Activated T-helper 1 cell treated with anti-CD3 and anti-CD28 coated beads, Interleukin-12 subunit alpha, Interleukin-12 subunit beta, Interleukin-2, Interleukin-4 antibody, amounts not matched to agents 30 ng/mL and 10 ng/mL and 1 ng/mL, durations not matched to agents 14 hours and 24 hours and 36 hours (primary cell): ENCODE measurements at regions of chr7 and their contacts with region 1.

Region 1: GRCh38 chr7:36852017-36852416 is 127.7 kb upstream of the AOAH start:
- DNase-seq: no peak
- H3K4me3 Mint-ChIP-seq: peak overlapping the region; percentile 4
- H3K27ac Mint-ChIP-seq: peak overlapping the region; percentile 83
- H3K4me1 Mint-ChIP-seq: peaks cover 21% of the 10 kb centered on the region
- H3K27me3 Mint-ChIP-seq: no peaks in the 10 kb centered on the region

Region 2: DNA sequence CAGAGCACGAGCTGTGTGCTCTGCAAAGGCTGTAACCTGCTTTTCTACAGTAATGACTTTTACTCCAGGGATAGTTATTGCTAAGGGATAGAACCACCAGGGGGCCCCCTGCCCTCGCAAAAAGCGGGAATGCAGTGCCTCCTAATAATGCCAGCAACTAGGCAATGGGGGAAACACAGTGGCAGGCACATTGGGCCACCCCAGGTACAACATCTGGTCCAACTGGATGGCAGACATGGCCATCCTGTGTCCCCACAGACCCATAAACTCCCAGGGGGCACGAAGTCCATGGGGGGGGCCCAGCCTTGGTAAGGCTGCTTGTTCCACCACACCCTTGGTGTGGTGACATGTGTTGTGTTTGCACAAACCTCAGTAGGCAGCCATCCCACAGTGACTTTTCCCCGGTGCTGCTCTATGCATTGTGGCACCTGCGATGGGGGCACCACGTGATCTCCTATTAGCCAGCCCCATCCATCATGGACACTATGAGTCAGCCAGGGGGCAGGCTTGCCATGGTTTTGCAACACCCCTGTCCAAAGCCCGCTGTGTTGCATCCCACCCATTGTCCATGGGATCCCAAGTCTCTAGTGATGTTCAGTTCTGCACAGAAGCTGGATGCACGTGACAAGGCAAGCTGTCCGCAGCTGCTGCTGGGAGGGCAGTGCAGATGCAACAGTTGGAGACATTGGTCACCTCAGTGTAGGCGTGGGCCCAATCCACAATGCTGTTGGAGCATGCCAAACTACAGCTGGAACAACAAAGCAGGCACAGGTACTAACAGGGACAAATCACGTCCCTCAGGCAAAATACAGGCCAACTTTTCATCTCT is 378.3 kb before region 1 on chr7:
- intact Hi-C with region 1: loop called (anchors 5 kb)
- DNase-seq: no peak
- H3K4me3 Mint-ChIP-seq: no peak overlapping the region
- H3K27ac Mint-ChIP-seq: no peak overlapping the region
- H3K4me1 Mint-ChIP-seq: peaks cover 19% of the 10 kb centered on the region
- H3K27me3 Mint-ChIP-seq: no peaks in the 10 kb centered on the region

Region 3: GRCh38 chr7:36686499-36686898 is 165.5 kb before region 1 on chr7:
- intact Hi-C with region 1: loop called (anchors 1 kb)
- DNase-seq: no peak
- H3K4me3 Mint-ChIP-seq: peak overlapping the region; percentile 69
- H3K27ac Mint-ChIP-seq: peak overlapping the region; percentile 91
- H3K4me1 Mint-ChIP-seq: peaks cover 78% of the 10 kb centered on the region
- H3K27me3 Mint-ChIP-seq: no peaks in the 10 kb centered on the region

Region 4: GRCh38 chr7:36863901-36864701 is 12.1 kb after region 1 on chr7:
- intact Hi-C with region 1: no loop called
- DNase-seq: no peak
- H3K4me3 Mint-ChIP-seq: no peak overlapping the region
- H3K27ac Mint-ChIP-seq: no peak overlapping the region
- H3K4me1 Mint-ChIP-seq: peaks cover 32% of the 10 kb centered on the region
- H3K27me3 Mint-ChIP-seq: no peaks in the 10 kb centered on the region

Region 5: GRCh38 chr7:36884910-36885309 is 32.9 kb after region 1 on chr7:
- intact Hi-C with region 1: no loop called
- DNase-seq: no peak
- H3K4me3 Mint-ChIP-seq: no peak overlapping the region
- H3K27ac Mint-ChIP-seq: no peak overlapping the region
- H3K4me1 Mint-ChIP-seq: peaks cover 28% of the 10 kb centered on the region
- H3K27me3 Mint-ChIP-seq: no peaks in the 10 kb centered on the region

Region 6: DNA sequence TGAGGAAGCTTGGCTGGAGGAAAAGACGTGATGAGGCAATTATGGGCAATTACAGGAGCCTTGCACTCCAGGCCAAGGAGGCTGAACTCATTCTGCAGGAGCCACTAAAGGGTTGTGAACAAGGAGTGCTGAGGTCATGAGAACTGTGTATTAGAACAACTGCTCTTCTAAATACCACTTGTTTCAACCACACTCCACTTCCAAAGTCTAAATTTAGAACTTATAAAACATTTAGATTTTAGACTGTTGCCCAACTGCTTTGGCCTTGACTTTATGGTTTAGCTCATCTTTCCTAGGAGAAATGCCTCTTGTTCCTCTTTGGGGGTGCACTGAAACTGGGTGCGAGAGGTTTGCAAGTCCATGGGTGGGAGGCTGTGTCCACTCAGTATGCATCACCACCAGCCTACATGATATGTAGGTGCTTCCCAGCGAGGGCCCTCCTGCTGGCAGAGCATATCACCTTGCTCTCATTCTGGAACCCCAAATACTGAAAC is 72.0 kb after region 1 on chr7:
- intact Hi-C with region 1: no loop called
- DNase-seq: no peak
- H3K4me3 Mint-ChIP-seq: no peak overlapping the region
- H3K27ac Mint-ChIP-seq: peak overlapping the region; percentile 36
- H3K4me1 Mint-ChIP-seq: peaks cover 7% of the 10 kb centered on the region
- H3K27me3 Mint-ChIP-seq: no peaks in the 10 kb centered on the region

Region 7: GRCh38 chr7:36937754-36938563 is 85.9 kb after region 1 on chr7:
- intact Hi-C with region 1: loop called (anchors 5 kb)
- DNase-seq: peak; percentile 59
- H3K4me3 Mint-ChIP-seq: peak overlapping the region; percentile 49
- H3K27ac Mint-ChIP-seq: peak overlapping the region; percentile 65
- H3K4me1 Mint-ChIP-seq: peaks cover 51% of the 10 kb centered on the region
- H3K27me3 Mint-ChIP-seq: no peaks in the 10 kb centered on the region

Region 8: GRCh38 chr7:37065779-37066271 is 213.8 kb after region 1 on chr7:
- intact Hi-C with region 1: loop called (anchors 1 kb)
- DNase-seq: no peak
- H3K4me3 Mint-ChIP-seq: peak overlapping the region; percentile 16
- H3K27ac Mint-ChIP-seq: peak overlapping the region; percentile 88
- H3K4me1 Mint-ChIP-seq: peaks cover 48% of the 10 kb centered on the region
- H3K27me3 Mint-ChIP-seq: no peaks in the 10 kb centered on the region